ENCODE measurements at regions of chr17 and their contacts with region 1.

Region 1: GRCh38 chr17:68462381-68463210 is 5.3 kb upstream of the WIPI1 start:
- DNase-seq: peak; percentile 80
- H3K4me3 ChIP-seq: no peak overlapping the region
- H3K27ac ChIP-seq: no peak overlapping the region
- H3K4me1 ChIP-seq: no peaks in the 10 kb centered on the region
- H3K27me3 ChIP-seq: no peaks in the 10 kb centered on the region
- CTCF ChIP-seq: peak; percentile 50

Region 2: DNA sequence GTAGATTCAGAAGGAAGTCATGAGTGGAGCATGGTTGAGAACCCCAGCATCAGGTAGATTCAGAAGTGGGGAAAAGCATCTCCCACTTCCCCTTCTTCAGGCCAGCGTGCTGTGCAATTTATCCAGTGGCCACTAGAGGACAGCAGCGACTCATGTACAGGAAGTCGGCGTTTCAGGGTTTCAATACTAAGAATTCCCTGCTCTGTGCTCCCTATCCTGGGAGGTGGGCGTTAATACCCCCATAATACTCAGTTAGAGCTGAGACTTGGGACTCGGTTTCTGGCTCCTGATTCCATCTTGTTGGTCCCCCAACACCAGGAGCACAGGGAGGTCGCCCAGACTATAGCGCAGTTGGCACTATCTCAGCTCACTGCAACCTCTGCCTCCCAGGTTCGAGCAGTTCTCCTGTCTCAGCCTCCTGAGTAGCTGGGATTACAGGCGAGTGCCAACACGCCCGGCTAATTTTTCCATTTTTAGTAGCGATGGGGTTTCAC is 290.1 kb before region 1 on chr17:
- intact Hi-C with region 1: loop called (anchors 5 kb)
- DNase-seq: peak; percentile 75
- H3K4me3 ChIP-seq: no peak overlapping the region
- H3K27ac ChIP-seq: no peak overlapping the region
- H3K4me1 ChIP-seq: no peaks in the 10 kb centered on the region
- H3K27me3 ChIP-seq: no peaks in the 10 kb centered on the region
- CTCF ChIP-seq: peak; percentile 99

Region 3: GRCh38 chr17:68260051-68260762 is 202.4 kb before region 1 on chr17:
- intact Hi-C with region 1: loop called (anchors 5 kb)
- DNase-seq: no peak
- H3K4me3 ChIP-seq: no peak overlapping the region
- H3K27ac ChIP-seq: no peak overlapping the region
- H3K4me1 ChIP-seq: no peaks in the 10 kb centered on the region
- H3K27me3 ChIP-seq: no peaks in the 10 kb centered on the region
- CTCF ChIP-seq: no peak

Region 4: GRCh38 chr17:68291844-68292695 is 170.5 kb before region 1 on chr17:
- intact Hi-C with region 1: no loop called
- DNase-seq: peak; percentile 74
- H3K4me3 ChIP-seq: peak overlapping the region; percentile 58
- H3K27ac ChIP-seq: peak overlapping the region; percentile 73
- H3K4me1 ChIP-seq: peaks cover 8% of the 10 kb centered on the region
- H3K27me3 ChIP-seq: peaks cover 37% of the 10 kb centered on the region
- CTCF ChIP-seq: no peak

Region 5: DNA sequence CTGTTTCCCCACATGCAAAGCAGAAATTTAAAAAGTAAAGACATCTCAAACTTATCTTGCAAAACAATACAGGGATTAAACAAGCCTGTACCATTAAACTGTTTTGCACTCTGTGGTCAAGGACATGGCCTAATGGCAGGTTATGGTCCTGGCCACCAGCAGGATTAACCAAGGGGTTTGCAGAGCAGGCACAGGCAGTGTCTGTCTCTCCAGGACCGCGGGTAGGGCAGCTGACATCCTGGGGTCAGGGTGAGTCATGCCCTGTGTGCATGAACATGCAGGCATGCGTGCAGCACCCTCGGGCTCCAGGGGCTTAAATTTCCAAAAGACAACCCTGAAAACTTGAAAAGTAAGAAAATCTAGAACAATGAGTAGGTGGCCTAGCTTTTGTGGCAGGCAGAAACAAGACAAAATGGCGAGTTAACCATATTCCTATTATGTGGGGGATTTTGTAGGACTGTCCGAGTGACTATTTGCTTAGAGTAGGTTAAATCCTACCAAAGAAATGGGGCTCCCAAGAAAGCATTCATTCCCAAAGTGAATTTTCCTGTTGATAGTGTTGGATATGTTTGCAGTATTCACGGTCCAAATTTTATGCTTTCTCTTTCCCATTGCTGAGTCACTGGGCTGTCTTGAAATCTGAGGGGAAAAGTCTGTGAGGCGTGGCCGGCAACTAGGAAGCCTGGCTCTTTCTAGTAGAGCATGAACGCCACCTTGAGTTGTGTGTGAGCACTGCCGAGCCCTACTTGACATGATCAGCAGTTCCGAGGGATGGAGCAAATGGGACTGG is 296.9 kb after region 1 on chr17:
- intact Hi-C with region 1: loop called (anchors 10 kb)
- DNase-seq: peak; percentile 90
- H3K4me3 ChIP-seq: peak overlapping the region; percentile 16
- H3K27ac ChIP-seq: peak overlapping the region; percentile 69
- H3K4me1 ChIP-seq: no peaks in the 10 kb centered on the region
- H3K27me3 ChIP-seq: no peaks in the 10 kb centered on the region
- CTCF ChIP-seq: peak; percentile 73